Activated CD4-positive, alpha-beta T cell treated with anti-CD3 and anti-CD28 coated beads, Interleukin-2, amount 10 ng/mL, durations not matched to agents 24 days and 14 days (primary cell): ENCODE measurements at regions of chr16 and their contacts with region 1.

Region 1: DNA sequence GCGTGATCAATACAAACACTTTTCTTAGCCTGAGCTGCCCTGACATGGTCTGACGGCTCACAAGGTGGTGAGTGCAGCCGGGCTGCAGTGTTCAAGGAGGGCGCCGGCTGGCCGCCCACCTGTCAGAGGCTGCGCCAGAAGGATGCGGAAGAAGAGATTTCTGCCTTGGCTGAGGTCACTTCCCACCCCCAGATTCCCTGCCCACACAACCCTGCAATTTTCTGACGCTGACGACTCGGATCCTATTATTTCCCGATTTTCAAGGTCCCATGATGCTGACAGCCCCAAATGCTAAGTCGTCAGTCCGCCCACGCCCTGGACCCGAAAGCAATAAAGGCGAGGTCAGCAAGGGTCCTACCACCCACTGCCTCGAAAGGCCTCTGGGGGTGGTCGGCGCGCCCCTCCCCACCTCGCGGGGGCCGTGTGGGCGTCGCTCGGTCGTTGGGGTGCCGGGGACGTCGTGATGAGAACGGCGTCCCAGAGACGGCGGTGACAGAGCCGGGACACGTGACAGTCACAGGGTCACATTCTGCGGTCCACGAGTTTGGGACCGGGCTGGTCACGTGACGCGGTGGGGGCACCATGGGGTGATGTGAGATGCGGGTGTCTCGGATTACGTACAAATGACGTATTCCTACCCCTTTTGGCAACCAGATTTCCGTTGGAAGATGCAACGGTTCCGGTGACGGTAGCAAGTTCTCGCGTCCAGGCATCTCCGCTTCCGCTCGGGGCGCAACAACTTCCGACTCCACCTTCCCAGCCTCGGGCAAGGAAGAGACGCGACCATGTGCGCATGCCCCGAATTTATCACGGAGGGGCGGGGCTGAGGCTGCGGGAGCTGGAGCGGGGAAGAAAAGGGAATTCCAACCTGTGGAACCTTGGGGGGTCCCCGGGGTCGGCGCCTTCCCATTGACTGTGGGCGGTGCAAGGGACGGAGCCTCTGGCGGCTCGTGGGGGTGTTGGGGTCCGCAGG is at the start of gene STX4:
- DNase-seq: peak; percentile 99
- H3K4me3 Mint-ChIP-seq: peak within 1 kb of the TSS; percentile 93
- H3K27ac Mint-ChIP-seq: peak within 1 kb of the TSS; percentile 96
- H3K4me1 Mint-ChIP-seq: peaks cover 15% of the 10 kb centered on the region
- H3K27me3 Mint-ChIP-seq: no peaks in the 10 kb centered on the region
- total RNA-seq, gene STX4: 49.1 and 54.8 TPM in 2 replicates

Region 2: DNA sequence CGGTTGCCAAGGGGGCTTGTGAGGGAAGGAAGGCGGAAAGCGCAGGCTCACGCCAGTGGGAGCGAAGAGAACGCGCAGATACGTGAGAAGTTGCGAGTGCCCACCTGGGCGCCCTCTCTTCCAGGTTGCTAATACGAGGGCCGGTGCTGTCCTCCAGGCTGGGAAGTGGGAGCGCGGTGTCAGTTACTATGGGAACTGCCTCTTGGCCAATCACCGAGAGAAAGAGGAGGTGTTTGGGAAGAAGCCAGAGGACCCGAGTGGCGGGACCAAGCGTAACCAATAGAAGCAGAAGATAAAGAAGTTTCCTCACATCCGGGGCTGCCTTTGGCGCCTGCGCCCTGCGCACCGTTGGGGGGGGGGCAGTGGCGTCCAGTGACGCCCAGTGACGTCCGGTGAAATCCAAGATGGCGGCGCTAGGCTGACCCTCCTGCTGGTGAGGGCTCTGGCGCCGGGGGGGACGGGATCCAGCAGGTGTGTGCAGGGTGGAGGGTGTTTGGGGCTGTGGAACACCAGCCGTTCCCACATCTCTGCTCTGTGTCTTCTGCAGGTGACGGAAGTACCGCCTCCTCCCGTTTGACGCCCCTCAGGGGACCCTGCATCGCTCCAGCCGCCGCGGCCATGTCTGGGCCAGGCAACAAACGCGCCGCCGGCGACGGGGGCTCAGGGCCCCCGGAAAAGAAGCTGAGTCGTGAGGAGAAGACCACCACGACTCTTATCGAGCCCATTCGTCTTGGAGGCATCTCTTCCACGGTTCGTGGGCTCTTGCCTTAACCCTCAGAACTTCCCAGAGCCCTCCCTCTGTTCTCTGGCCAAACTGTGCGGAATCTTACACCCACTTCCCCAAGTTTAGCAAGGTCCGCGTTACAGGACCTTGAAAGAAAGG is 270.9 kb before region 1 on chr16 and contains the starts of genes CFAP119 and RNF40:
- intact Hi-C with region 1: loop called (anchors 1 kb)
- DNase-seq: peak; percentile 99
- H3K4me3 Mint-ChIP-seq: peak within 1 kb of the TSS; percentile 97
- H3K27ac Mint-ChIP-seq: peak within 1 kb of the TSS; percentile 83
- H3K4me1 Mint-ChIP-seq: peaks cover 22% of the 10 kb centered on the region
- H3K27me3 Mint-ChIP-seq: no peaks in the 10 kb centered on the region
- total RNA-seq, gene CFAP119: 4.0 and 4.2 TPM in 2 replicates
- total RNA-seq, gene RNF40: 95.4 and 100 TPM in 2 replicates

Region 3: DNA sequence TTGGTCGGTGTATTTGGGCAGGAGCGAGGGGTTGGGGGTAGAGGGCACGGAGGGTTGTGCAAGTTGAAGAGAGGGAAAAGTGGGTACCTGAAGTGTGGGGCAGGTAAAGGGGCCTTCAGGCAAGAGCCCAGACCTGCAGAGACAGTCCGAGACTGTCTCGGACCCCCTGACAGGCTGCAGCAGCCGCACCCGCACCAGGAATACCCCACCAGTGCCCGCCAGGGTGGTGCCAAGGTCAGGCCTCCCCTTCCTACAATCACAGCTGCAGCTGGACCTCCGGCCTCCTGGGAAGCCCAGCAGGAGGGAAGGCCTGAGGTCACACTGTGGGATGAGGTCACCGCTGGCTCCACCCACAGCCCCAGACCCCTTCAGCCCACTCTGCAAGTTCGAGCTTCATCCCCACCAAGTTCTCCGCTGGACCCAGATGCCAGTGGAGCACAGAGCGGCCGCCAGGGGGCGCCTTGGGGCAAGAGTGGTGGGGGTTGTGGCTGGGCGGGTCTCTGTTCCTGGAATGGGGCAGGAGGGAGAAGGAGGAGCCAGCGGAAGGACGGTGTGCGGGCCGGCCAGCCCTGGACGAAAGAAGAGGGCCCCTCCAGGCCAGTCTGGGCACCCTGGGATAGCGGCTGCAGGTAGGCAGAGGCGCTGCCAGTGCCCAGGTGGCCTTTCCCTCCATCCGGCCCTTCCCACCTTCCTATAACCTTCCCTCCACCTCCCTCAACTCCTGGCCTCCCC is 48.2 kb before region 1 on chr16 and contains the start of gene HSD3B7:
- intact Hi-C with region 1: loop called (anchors 2 kb)
- DNase-seq: peak; percentile 96
- H3K4me3 Mint-ChIP-seq: peak within 1 kb of the TSS; percentile 52
- H3K27ac Mint-ChIP-seq: peak within 1 kb of the TSS; percentile 47
- H3K4me1 Mint-ChIP-seq: peaks cover 8% of the 10 kb centered on the region
- H3K27me3 Mint-ChIP-seq: no peaks in the 10 kb centered on the region
- total RNA-seq, gene HSD3B7: 2.9 and 3.2 TPM in 2 replicates

Region 4: DNA sequence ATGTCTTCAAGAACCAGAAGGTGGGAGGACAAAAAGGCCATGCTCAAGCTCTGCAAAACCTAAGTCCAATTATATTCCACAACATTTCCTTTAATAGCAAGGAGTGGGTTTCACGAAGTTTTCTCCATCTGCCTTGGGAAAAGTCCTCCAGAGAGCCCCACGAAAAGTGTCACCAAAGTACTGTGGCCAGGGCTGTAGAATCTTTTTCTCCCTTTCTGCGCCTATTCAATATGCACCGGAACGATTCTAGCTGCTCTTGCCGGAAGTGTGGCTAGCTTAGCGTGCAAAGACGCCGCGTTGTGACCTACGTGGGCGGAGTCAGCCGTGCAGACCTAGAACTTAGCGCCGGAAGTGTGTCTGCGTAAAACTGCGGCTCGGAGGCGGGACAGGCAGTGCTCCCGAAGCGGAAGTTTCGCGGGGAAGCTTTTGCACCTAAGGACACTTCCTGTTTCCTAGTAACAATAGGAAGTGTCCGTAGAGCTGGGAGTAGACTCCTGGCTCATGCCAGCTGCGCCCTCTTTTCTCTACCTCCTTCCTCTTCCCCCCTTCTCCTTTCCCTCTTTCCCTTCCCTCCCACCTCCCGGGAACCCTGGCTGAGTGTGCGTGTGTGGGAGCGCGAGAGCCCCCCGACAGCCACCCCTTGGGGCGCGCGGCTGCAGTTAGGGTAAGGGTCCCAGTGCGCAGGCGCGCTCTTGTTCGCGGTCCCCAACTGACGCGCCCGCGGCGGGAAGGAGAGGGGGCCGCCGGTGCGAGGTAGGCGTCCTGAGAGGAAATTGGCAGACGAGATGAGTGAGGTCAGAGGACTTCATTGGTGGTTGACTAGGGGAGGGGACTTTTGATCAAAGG is 41.2 kb after region 1 on chr16 and contains the starts of genes ZNF646 and ZNF668:
- intact Hi-C with region 1: loop called (anchors 1 kb)
- DNase-seq: peak; percentile 99
- H3K4me3 Mint-ChIP-seq: peak within 1 kb of the TSS; percentile 90
- H3K27ac Mint-ChIP-seq: peak within 1 kb of the TSS; percentile 93
- H3K4me1 Mint-ChIP-seq: peaks cover 31% of the 10 kb centered on the region
- H3K27me3 Mint-ChIP-seq: no peaks in the 10 kb centered on the region
- total RNA-seq, gene ZNF646: 21.1 and 23.3 TPM in 2 replicates
- total RNA-seq, gene ZNF668: 15.6 and 15.9 TPM in 2 replicates

Region 5: DNA sequence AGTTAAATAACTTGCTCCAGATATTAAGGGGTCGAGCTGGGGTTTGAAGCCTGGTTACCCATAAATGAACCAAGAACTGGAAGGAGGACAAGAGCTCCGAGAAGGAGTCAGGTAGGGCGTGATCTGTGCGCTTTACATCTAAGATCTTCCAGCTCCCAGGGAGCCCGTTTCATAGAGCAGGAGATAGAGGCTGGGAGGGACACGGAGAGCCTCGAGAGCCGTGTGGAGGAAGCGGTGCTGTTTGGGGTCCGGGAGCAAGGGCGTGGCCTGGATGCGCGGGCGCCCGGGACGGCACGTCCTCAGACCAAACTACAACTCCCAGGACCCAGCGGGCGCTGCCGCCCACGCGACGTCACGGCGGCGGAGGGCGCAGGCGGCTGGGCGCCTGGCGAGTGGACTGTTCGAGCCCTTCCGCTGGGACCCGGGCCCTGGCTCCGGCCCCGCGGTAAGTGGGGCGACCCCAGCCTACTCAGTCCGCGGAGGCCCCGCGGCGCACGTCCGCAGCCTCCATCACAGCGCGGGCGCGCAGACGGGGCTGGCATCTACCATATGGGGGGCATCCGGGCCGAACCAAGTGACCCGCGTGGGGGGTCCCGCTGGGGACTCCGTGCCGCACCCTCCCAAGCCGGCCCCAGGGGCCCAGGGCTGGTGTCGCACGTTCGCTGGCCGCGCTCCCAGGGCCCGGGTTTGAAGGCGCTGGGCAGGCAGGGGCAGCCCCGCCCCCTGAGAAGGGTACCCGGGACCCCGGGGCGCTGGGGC is 75.2 kb after region 1 on chr16 and contains the start of gene BCKDK:
- intact Hi-C with region 1: loop called (anchors 2 kb)
- DNase-seq: peak; percentile 93
- H3K4me3 Mint-ChIP-seq: peak within 1 kb of the TSS; percentile 92
- H3K27ac Mint-ChIP-seq: peak within 1 kb of the TSS; percentile 95
- H3K4me1 Mint-ChIP-seq: peaks cover 22% of the 10 kb centered on the region
- H3K27me3 Mint-ChIP-seq: no peaks in the 10 kb centered on the region
- total RNA-seq, gene BCKDK: 44.3 and 44.9 TPM in 2 replicates

Region 6: DNA sequence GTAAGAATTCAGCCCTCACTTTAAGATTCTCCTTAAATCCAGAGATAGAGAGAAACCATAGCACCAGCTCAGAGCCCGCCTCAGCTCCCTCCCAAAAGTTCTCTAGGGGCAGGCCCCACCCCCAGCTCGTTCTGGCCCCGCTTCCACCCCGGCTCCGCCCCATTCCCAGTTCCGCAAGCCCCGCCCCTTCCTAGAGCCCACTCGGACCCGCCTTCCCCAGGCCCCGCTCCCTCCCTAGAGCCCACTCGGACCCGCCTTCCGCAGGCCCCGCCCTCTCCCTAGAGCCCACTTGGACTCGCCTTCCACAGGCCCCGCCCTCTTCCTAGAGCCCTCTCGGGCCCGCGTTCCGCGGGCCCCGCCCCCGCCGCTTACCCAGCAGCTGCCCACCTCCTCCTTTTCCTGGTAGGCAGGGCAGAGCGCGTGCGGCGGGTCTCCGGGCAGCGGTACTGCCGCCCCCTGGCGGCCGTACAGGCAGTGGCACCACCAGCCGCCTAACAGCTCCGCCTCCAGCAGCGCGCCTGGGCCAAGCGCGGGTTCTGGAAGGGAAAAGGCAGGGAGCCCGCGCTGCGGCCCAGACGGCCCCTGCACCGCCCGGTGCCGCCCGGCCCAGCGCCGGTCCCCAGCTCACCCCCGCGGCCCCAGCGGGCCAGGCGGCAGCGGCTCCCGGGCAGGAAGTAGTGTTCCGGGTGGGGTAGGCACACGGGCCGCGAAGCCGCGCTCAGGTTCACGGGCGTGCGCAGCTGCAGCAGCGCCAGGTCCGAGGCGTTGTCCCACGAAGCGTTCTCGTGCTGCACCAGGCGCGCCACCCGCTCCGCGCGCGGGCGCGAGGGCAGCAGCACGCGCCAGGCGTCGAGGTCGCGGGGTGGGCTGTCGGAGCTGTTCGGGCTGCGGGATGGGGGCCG is 109.3 kb after region 1 on chr16:
- intact Hi-C with region 1: loop called (anchors 1 kb)
- DNase-seq: peak; percentile 99
- H3K4me3 Mint-ChIP-seq: peak overlapping the region; percentile 69
- H3K27ac Mint-ChIP-seq: peak overlapping the region; percentile 82
- H3K4me1 Mint-ChIP-seq: peaks cover 8% of the 10 kb centered on the region
- H3K27me3 Mint-ChIP-seq: no peaks in the 10 kb centered on the region